Ovary (tissue), 10 donors: ENCODE measurements at regions of chr18 and their contacts with region 1.

Region 1: DNA sequence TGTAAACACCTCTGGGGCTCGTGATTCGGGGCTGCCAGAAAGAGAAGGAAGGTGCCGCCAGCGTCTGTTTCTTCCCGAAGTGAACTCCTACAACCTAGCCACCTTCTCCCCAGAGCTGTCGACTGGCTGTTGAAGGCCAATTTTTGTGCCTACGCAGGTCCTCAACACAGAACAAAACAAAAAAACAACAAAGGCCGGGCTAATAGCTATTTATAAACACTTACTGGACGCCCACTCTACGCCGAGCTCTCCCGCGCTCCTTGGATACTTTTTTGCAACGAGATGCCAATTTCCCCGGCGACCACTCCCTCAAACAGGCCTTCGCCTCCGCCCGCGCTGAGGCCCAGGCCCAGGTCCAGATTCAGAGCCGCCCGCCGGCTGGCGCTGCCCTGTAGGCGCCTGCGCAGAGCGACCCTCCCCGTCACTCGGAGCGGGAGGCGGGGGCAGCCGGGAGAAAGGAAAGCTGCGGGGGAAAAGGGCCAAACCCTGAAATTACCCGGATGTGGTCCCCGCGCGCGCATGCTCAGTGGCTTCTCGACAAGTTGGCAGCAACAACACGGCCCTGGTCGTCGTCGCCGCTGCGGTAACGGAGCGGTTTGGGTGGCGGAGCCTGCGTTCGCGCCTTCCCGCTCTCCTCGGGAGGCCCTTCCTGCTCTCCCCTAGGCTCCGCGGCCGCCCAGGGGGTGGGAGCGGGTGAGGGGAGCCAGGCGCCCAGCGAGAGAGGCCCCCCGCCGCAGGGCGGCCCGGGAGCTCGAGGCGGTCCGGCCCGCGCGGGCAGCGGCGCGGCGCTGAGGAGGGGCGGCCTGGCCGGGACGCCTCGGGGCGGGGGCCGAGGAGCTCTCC is at the start of gene SMAD4:
- DNase-seq: peak; percentile 97 to 99 (median 98)
- H3K4me3 ChIP-seq: peak within 1 kb of the TSS; percentile 72
- H3K27ac ChIP-seq: peak within 1 kb of the TSS; percentile 99
- H3K4me1 ChIP-seq: peaks cover 7% of the 10 kb centered on the region
- H3K27me3 ChIP-seq: no peaks in the 10 kb centered on the region
- CTCF ChIP-seq: no peak
- EP300 ChIP-seq: peak; percentile 40
- POLR2A ChIP-seq: peak; percentile 95
- total RNA-seq, gene SMAD4: 104 to 159 (median 140) TPM

Region 2: DNA sequence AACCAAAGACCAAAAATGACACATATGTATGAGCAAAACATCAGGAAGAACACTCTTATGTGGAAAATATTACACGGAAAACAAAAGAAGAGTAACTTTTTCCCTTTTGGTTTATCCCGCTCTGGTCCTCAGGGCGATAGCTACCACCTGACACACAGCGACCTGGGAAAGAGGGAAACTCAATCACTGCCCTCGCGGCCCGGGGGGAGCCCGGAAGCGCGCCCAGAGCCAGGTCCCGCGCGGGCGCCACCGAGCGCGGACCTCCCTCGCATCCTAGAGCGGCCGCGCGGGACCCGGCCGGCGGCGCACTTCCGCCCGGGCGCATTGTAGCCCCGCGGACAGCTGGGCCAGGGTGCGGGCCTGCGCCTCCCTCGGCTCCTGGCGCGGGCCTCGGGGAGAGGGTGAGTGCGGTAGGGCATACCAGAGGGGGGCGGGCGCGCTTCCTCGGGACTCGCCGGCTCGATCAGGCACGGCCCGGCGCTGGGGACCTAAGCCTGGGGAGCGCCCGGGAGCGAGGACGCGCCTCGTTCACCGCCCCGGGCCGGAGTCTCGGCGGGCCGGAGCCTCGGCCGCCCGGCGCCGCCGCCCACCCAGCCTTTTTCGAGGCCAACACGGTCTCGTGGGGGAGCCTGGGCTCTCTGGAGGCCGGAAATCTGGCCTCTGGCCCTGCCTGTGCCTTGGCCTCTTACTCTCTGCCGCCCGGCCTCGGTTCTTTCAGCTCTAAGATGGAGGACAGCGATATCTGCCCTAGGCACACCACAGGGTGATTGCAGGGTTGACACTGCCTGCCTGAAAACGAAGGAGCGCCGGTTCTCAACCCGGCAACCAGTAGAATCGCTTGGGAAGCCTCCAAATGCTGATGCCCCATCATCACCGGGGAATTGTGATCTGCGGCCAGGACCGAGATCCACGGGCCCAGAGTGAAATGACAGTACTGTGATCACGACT is 61.9 kb before region 1 on chr18 and contains the start of gene ELAC1:
- intact Hi-C with region 1: loop called in 1 of 4 experiments (anchors 10 kb)
- DNase-seq: peak; percentile 68 to 85 (median 81)
- H3K4me3 ChIP-seq: peak within 1 kb of the TSS; percentile 61
- H3K27ac ChIP-seq: peak within 1 kb of the TSS; percentile 90 to 97
- H3K4me1 ChIP-seq: peaks cover 5% of the 10 kb centered on the region
- H3K27me3 ChIP-seq: no peaks in the 10 kb centered on the region
- CTCF ChIP-seq: peak in 1 of 3 donors; percentile 27
- EP300 ChIP-seq: no peak
- POLR2A ChIP-seq: peak; percentile 92
- total RNA-seq, gene ELAC1: 2.5 to 14.3 (median 6.4) TPM

Region 3: GRCh38 chr18:51082571-51083267 is 52.8 kb after region 1 on chr18:
- intact Hi-C with region 1: no loop called
- DNase-seq: no peak
- H3K4me3 ChIP-seq: no peak overlapping the region
- H3K27ac ChIP-seq: no peak overlapping the region
- H3K4me1 ChIP-seq: no peaks in the 10 kb centered on the region
- H3K27me3 ChIP-seq: no peaks in the 10 kb centered on the region
- CTCF ChIP-seq: no peak
- EP300 ChIP-seq: no peak
- POLR2A ChIP-seq: no peak

Region 4: GRCh38 chr18:51197661-51198424 is 167.9 kb after region 1 on chr18 and contains the start of gene MEX3C:
- intact Hi-C with region 1: loop called in 2 of 4 experiments (anchors 5 to 10 kb)
- DNase-seq: peak; percentile 99
- H3K4me3 ChIP-seq: peak within 1 kb of the TSS; percentile 94
- H3K27ac ChIP-seq: peak within 1 kb of the TSS; percentile 94 to 98
- H3K4me1 ChIP-seq: peaks cover 9% of the 10 kb centered on the region
- H3K27me3 ChIP-seq: no peaks in the 10 kb centered on the region
- CTCF ChIP-seq: peak; percentile 26 to 36 (median 32)
- EP300 ChIP-seq: peak; percentile 44
- POLR2A ChIP-seq: peak; percentile 56
- total RNA-seq, gene MEX3C: 21.6 to 47.4 (median 33.0) TPM